ENCODE measurements at regions of chr10 and their contacts with region 1.

Region 1: GRCh38 chr10:73819513-73820093 is 8.2 kb upstream of the NDST2 start:
- DNase-seq: no peak
- ATAC-seq: no peak
- H3K4me3 ChIP-seq: no peak overlapping the region
- H3K4me3 Mint-ChIP-seq: no peak overlapping the region
- H3K27ac ChIP-seq: no peak overlapping the region
- H3K27ac Mint-ChIP-seq: peak overlapping the region in 1 of 2 donors; percentile 70
- H3K4me1 ChIP-seq: no peaks in the 10 kb centered on the region
- H3K4me1 Mint-ChIP-seq: no peaks in the 10 kb centered on the region
- H3K27me3 ChIP-seq: no peaks in the 10 kb centered on the region
- H3K27me3 Mint-ChIP-seq: no peaks in the 10 kb centered on the region

Region 2: GRCh38 chr10:73644015-73644743 is 175.4 kb before region 1 on chr10:
- CTCF ChIA-PET with region 1: no interaction called
- POLR2A ChIA-PET with region 1: no interaction called
- DNase-seq: peak in 31 of 35 experiments; percentile 10 to 79 (median 42)
- ATAC-seq: peak; percentile 62 to 74 (median 70)
- H3K4me3 ChIP-seq: no peak overlapping the region
- H3K4me3 Mint-ChIP-seq: no peak overlapping the region
- H3K27ac ChIP-seq: no peak overlapping the region
- H3K27ac Mint-ChIP-seq: no peak overlapping the region
- H3K4me1 ChIP-seq: peaks cover 0 to 19% of the 10 kb centered on the region in 2 experiments
- H3K4me1 Mint-ChIP-seq: peaks cover 4 to 10% (median 4%) of the 10 kb centered on the region in 3 donors
- H3K27me3 ChIP-seq: peaks cover 0 to 40% of the 10 kb centered on the region in 2 experiments
- H3K27me3 Mint-ChIP-seq: peaks cover 8 to 9% of the 10 kb centered on the region in 2 donors

Region 3: GRCh38 chr10:73908853-73909538 is 89.4 kb after region 1 on chr10:
- CTCF ChIA-PET with region 1: no interaction called
- POLR2A ChIA-PET with region 1: no interaction called
- DNase-seq: peak in 28 of 35 experiments; percentile 10 to 62 (median 27)
- ATAC-seq: peak in 3 of 4 experiments; percentile 17 to 52 (median 27)
- H3K4me3 ChIP-seq: no peak overlapping the region
- H3K4me3 Mint-ChIP-seq: peak overlapping the region in 2 of 3 donors; percentile 25 to 35
- H3K27ac ChIP-seq: no peak overlapping the region
- H3K27ac Mint-ChIP-seq: no peak overlapping the region
- H3K4me1 ChIP-seq: peaks cover 0 to 38% of the 10 kb centered on the region in 2 experiments
- H3K4me1 Mint-ChIP-seq: peaks cover 29 to 34% (median 33%) of the 10 kb centered on the region in 3 donors
- H3K27me3 ChIP-seq: peaks cover 0 to 73% of the 10 kb centered on the region in 2 experiments
- H3K27me3 Mint-ChIP-seq: peaks cover 54 to 58% of the 10 kb centered on the region in 2 donors

Region 4: DNA sequence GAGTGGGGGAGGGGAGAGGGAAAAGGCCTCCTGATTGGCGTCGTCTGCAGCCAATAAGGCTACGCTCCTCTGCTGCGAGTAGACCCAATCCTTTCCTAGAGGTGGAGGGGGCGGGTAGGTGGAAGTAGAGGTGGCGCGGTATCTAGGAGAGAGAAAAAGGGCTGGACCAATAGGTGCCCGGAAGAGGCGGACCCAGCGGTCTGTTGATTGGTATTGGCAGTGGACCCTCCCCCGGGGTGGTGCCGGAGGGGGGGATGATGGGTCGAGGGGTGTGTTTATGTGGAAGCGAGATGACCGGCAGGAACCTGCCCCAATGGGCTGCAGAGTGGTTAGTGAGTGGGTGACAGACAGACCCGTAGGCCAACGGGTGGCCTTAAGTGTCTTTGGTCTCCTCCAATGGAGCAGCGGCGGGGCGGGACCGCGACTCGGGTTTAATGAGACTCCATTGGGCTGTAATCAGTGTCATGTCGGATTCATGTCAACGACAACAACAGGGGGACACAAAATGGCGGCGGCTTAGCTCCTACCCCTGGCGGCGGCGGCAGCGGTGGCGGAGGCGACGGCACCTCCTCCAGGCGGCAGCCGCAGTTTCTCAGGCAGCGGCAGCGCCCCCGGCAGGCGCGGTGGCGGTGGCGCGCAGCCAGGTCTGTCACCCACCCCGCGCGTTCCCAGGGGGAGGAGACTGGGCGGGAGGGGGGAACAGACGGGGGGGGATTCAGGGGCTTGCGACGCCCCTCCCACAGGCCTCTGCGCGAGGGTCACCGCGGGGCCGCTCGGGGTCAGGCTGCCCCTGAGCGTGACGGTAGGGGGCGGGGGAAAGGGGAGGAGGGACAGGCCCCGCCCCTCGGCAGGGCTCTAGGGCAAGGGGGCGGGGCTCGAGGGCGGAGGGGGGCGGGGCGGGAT is 1006.8 kb after region 1 on chr10 and contains the start of gene KAT6B:
- CTCF ChIA-PET with region 1: no interaction called
- POLR2A ChIA-PET with region 1: interaction called in 1 of 2 experiments, 11 read pairs
- DNase-seq: peak; percentile 99 to 100 (median 100)
- ATAC-seq: peak; percentile 78 to 82 (median 80)
- H3K4me3 ChIP-seq: peak within 1 kb of the TSS; percentile 67 to 89
- H3K4me3 Mint-ChIP-seq: peak within 1 kb of the TSS; percentile 90 to 94 (median 90)
- H3K27ac ChIP-seq: peak within 1 kb of the TSS; percentile 85
- H3K27ac Mint-ChIP-seq: peak within 1 kb of the TSS; percentile 94 to 96
- H3K4me1 ChIP-seq: peaks cover 34 to 45% of the 10 kb centered on the region in 2 experiments
- H3K4me1 Mint-ChIP-seq: peaks cover 66 to 70% (median 69%) of the 10 kb centered on the region in 3 donors
- H3K27me3 ChIP-seq: no peaks in the 10 kb centered on the region
- H3K27me3 Mint-ChIP-seq: no peaks in the 10 kb centered on the region
- total RNA-seq, gene KAT6B: 46.2 to 94.4 (median 52.4) TPM

Measured in T-cell (primary cell).